ENCODE measurements at regions of chr6 and their contacts with region 1.

Region 1: DNA sequence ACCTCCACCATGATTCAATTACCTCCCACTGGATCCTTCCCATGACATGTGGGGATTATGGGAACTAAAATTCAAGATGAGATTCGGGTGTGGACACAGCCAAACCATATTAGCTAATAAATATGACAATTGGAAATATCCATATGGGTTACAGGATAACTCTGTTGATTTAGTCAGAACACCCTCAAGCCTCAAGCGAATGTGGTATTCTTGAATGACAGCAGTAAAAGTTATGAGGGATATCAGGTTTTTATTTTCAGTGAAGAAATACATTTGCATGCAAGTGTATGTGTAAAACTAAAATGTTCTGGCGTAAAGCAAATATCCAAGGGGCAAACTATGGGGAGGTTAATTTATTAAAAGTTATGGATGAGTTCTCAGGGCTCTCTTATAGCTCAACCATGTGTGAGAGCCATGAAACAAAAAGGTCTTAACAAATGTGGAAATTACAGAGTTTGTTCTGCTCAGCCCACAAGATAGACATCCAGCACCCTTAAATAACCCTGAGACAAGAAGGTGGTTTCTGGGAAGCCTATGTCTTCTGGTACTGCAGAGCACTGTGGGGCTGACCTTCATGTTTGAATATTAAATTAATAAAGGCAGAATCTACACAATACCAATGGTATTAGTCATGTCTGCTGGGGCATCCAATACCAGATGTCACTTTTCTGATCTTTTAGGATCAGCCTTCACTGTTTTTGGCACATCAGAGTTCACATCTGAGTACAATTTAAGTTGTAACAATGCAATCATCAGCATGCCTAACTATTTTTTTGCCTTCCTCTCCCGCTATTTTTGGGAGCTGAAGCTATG is 370.5 kb upstream of the RSPO3 start:
- DNase-seq: no peak

Region 2: DNA sequence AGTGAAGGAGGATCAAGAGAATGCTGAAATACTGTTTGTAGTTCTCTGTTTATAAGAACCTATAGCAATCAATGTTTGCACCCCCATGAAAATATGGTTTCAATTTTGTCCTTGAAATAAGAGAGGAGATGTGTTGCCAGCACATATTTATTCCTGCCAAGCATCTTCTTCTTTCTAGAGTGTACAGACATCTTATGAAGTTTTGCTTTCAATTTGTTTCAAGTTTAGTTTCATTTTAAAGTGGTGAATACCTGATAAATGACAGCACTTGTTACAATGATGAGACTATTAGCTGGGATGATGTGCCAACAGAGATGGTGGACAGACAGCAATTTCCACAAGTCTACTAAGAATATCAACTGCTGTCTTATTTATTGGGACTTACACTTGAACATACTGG is 447.2 kb before region 1 on chr6:
- intact Hi-C with region 1: no loop called
- DNase-seq: no peak

Region 3: DNA sequence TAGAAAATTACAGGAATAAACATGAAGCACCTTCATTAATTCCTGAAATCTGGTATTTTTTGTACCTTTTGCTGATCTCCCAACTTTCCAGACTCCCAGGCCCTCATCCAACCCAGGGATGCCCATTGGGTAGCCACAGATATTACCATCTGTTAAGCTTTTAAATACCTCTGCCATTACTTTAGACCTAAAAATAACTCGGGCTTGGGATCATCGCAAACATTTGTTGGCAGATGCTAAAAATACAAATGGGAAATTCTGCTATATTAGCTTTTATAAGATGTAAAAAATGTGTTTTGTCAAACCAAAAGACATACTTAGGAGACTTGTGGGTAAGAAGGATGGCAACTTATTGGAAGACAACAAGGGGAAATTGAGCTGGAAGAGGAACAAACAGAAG is 31.9 kb before region 1 on chr6:
- intact Hi-C with region 1: loop called in 1 of 2 experiments (anchors 2 kb)
- DNase-seq: no peak

Measured in posterior vena cava (tissue), 2 donors.